IMR-90 (cell line): ENCODE measurements at regions of chr1 and their contacts with region 1.

Region 1: DNA sequence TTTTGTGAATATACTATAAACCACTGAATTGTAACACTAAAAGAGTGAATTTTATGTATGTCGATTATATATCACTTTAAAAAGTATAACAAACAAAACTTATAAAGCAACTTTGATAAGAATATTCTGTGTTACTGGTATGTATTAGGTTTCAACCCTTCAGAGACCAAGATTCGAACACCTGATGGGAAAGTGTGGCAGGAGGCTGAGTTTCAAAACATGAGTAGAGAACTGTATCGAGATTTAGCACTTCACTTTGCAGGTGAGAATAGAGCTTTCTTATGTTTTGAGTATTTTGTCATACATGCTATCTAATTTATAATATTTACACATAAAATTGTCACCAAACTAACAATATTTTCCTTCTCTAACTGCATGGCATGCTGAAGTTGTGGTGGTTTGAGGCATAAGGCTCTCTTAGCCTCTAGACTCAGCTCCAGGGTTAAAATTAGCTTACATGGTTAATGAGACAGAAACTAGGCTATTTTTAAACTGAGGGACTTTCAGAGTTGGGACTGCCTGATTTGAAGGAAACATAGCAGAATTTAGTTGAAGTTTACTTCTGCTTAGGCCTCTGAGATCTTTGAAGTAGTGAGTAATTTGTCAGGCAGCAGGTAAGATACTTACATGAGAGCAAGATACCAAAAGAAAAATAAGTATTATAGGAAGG is 48.6 kb downstream of the CEP350 start:
- DNase-seq: no peak
- ATAC-seq: no peak
- H3K4me3 ChIP-seq: no peak overlapping the region
- H3K27ac ChIP-seq: no peak overlapping the region
- H3K4me1 ChIP-seq: peaks cover 3% of the 10 kb centered on the region; the same call in 1 of the 2 replicates
- H3K27me3 ChIP-seq: no peaks in the 10 kb centered on the region
- CTCF ChIP-seq: no peak
- POLR2A ChIP-seq: no peak
- RAD21 ChIP-seq: no peak

Region 2: DNA sequence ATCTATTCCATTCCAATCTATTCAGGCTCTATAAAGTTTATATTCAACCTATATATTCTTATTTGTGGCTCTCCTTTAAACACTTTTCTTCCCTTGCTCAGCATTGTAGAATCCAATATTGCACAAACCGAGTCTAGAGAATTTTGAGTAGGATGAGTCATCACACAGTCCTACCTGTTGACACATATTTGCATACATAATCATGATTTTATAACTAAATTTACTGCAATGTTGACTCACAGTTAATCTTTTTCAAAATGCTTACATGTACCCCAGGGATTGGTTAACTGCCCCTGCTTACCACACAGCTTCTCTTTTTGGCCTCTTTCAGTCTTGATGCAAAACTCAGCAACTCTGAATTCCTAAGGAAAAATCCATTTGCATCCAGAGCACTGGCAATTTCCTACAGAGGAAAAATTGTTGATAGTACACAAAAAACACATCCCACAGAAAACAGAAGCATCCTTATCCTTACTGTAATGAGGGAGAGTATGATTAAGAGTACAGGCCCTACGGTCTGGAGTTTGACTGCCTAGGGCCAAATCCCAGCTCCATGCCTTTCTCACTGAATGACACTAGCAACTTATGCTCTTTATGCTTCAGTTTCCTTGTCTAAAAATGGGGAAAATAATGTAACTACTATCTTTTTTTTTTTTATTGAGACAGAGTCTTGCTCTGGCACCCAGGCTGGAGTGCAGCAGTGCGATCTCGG is 76.5 kb before region 1 on chr1:
- CTCF ChIA-PET with region 1: no interaction called
- POLR2A ChIA-PET with region 1: no interaction called
- dilution Hi-C with region 1: no loop called
- in situ Hi-C with region 1: no loop called
- intact Hi-C with region 1: no loop called
- DNase-seq: peak; percentile 81
- ATAC-seq: peak; percentile 77
- H3K4me3 ChIP-seq: no peak overlapping the region
- H3K27ac ChIP-seq: no peak overlapping the region
- H3K4me1 ChIP-seq: peaks cover 3% of the 10 kb centered on the region
- H3K27me3 ChIP-seq: no peaks in the 10 kb centered on the region
- CTCF ChIP-seq: no peak
- POLR2A ChIP-seq: no peak
- RAD21 ChIP-seq: no peak

Region 3: GRCh38 chr1:179954493-179955297 is 48.5 kb before region 1 on chr1 and contains the start of gene CEP350:
- CTCF ChIA-PET with region 1: no interaction called
- POLR2A ChIA-PET with region 1: no interaction called
- dilution Hi-C with region 1: no loop called
- in situ Hi-C with region 1: no loop called
- intact Hi-C with region 1: no loop called
- DNase-seq: peak; percentile 99
- ATAC-seq: peak; percentile 96
- H3K4me3 ChIP-seq: peak within 1 kb of the TSS; percentile 76
- H3K27ac ChIP-seq: peak within 1 kb of the TSS; percentile 84
- H3K4me1 ChIP-seq: peaks cover 2% of the 10 kb centered on the region; the same call in 1 of the 2 replicates
- H3K27me3 ChIP-seq: no peaks in the 10 kb centered on the region
- CTCF ChIP-seq: no peak
- POLR2A ChIP-seq: peak; percentile 70
- RAD21 ChIP-seq: no peak
- total RNA-seq, gene CEP350: 36.4 and 55.8 TPM in 2 replicates

Region 4: DNA sequence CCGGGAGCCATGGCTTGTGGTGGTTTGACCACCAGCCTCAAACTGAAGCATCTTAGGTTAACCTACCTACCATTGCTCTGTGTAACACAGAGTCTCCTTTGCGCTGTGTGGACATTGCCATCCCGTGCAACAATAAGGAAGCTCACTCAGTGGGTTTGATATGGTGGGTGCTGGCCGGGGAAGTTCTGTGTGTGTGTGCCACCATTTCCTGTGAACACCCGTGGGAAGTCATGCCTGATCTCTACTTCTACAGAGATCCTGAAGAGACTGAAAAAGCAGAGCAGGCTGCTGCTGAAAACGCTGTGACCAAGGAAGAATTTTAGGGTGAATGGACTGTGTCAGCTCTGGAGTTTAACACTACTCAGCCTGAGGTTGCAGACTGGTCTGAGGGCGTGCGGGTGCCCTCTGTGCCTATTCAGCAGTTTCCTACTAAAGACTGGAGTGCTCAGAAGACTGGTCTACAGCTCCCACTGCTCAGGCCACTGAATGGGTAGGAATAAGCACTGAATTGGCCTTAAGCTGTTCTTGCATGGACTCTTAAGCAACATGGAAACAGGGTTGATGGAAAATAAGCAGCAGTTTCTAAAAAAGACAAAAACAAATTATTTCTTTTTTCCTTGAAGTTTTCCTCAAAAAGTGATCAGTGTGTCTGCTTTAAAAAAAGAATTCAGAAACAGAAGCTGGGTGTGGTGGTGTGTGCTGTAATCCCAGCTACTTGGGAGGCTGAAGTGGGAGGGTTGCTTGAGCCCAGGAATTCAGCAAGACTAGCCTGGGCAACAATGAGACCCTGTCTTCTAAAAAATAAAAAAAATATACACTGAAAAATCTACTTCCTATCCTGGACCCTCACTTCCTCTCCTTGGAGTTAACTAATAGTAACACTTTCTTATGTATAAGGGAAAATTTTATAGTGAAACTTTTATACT is 33.9 kb before region 1 on chr1:
- CTCF ChIA-PET with region 1: no interaction called
- POLR2A ChIA-PET with region 1: no interaction called
- dilution Hi-C with region 1: no loop called
- in situ Hi-C with region 1: no loop called
- intact Hi-C with region 1: loop called (anchors 5 kb)
- DNase-seq: no peak
- ATAC-seq: no peak
- H3K4me3 ChIP-seq: no peak overlapping the region
- H3K27ac ChIP-seq: no peak overlapping the region
- H3K4me1 ChIP-seq: peaks cover 1% of the 10 kb centered on the region; the same call in 1 of the 2 replicates
- H3K27me3 ChIP-seq: no peaks in the 10 kb centered on the region
- CTCF ChIP-seq: no peak
- POLR2A ChIP-seq: no peak
- RAD21 ChIP-seq: no peak